ENCODE measurements at regions of chr3 and their contacts with region 1.

Region 1: GRCh38 chr3:53114011-53114400 is 16.2 kb downstream of the RFT1 start:
- DNase-seq: peak; percentile 65 to 73
- ATAC-seq: peak; percentile 89 to 90
- H3K4me3 ChIP-seq: no peak overlapping the region
- H3K27ac ChIP-seq: peak overlapping the region; percentile 62 to 76 (median 72)
- H3K4me1 ChIP-seq: peaks cover 26 to 31% of the 10 kb centered on the region in 2 donors
- H3K27me3 ChIP-seq: no peaks in the 10 kb centered on the region
- CTCF ChIP-seq: peak; percentile 86 to 94 (median 93)
- POLR2A ChIP-seq: no peak

Region 2: GRCh38 chr3:53195602-53196574 is 81.9 kb after region 1 on chr3:
- in situ Hi-C with region 1: loop called (anchors 5 kb)
- intact Hi-C with region 1: loop called (anchors 1 kb)
- DNase-seq: no peak
- ATAC-seq: peak; percentile 60 to 77
- H3K4me3 ChIP-seq: no peak overlapping the region
- H3K27ac ChIP-seq: no peak overlapping the region
- H3K4me1 ChIP-seq: peaks cover 13% of the 10 kb centered on the region in 2 donors
- H3K27me3 ChIP-seq: no peaks in the 10 kb centered on the region
- CTCF ChIP-seq: peak; percentile 89 to 100 (median 98)
- POLR2A ChIP-seq: no peak

Region 3: GRCh38 chr3:53231572-53232511 is 117.8 kb after region 1 on chr3:
- in situ Hi-C with region 1: no loop called
- intact Hi-C with region 1: no loop called
- DNase-seq: no peak
- ATAC-seq: no peak
- H3K4me3 ChIP-seq: no peak overlapping the region
- H3K27ac ChIP-seq: no peak overlapping the region
- H3K4me1 ChIP-seq: peaks cover 7 to 12% of the 10 kb centered on the region in 2 donors
- H3K27me3 ChIP-seq: no peaks in the 10 kb centered on the region
- CTCF ChIP-seq: no peak
- POLR2A ChIP-seq: no peak